Activated CD4-positive, alpha-beta T cell treated with anti-CD3 and anti-CD28 coated beads, Interleukin-2, amount 10 ng/mL, durations not matched to agents 7 days and 5 days (primary cell): ENCODE measurements at regions of chr2 and their contacts with region 1.

Region 1: DNA sequence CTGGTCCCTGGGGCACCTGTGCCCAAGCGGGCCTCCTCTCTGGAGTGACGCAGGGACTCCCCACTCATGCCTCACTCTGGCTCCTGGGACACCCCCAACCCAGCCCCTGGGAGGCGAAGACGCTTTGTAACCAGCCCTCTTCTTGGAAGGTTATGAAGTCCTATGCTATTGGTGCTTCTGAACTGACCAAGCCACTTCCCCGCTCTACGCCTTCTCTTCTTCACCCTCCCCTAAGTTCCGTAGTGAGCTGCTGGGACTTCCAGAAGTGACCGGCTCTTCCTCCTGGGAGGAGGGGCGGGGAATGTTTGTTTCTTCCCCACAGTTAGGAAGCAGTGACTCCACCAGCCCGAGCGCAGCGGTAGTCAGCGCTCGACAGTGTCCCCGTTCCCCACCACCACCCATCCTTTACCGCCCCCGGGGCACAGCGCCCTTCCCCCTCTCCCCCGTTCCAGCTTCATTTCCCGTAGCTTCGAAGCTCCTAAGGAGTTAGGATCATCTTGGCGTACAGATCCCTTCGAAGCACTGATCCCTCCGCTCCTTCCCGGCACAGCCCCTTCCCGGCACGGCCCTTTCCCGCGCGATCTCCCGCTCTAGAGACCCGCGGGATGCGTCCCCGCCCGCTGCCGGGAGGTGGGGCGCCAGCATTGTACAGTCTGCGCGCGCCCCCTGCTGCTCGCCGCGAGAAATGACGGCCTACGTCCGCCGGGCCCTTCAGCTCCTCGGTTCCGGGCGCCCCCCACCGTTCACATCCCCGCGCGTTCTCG is 25.3 kb upstream of the NOTO start:
- DNase-seq: peak; percentile 88
- H3K4me3 Mint-ChIP-seq: peak overlapping the region; percentile 77
- H3K27ac Mint-ChIP-seq: peak overlapping the region; percentile 50
- H3K4me1 Mint-ChIP-seq: peaks cover 18% of the 10 kb centered on the region
- H3K27me3 Mint-ChIP-seq: peaks cover 67% of the 10 kb centered on the region

Region 2: DNA sequence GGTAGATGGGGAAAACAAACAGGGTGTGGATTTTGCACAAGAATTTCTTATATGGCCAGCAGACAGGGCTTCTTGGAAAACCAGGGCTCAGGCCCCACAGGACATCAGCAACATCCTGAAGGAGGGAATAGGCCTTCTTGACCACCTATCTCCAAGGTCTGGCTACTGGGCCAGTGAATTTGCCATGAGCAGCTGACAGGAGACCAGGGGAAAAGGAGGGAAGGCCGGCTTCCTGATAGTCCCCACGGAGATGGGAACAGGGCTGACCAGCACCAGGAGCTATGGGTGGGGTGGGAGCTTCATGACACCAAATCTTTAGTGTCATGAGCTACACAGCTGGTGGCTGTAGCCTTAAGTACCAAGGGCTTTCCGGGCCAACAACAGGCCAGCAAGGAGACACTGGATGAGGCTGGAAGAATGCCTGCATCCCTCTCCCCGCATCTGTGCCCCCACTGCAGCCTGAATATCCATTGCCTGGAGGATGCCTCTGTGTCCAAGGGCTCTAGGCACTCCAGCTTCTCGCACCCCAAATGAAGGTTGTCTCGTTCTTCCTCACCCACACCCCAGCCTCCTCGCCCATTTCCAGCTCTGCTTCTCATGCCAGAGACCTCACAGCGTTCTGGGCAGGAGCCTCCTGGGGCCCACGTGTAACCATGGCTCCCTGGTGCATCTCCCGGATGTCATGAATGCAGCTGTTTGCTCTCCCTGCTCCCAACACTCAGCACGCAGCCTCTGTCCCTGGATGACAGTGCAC is 184.9 kb before region 1 on chr2:
- CTCF ChIA-PET with region 1: interaction called, 12 read pairs
- POLR2A ChIA-PET with region 1: no interaction called
- DNase-seq: no peak
- H3K4me3 Mint-ChIP-seq: no peak overlapping the region
- H3K27ac Mint-ChIP-seq: no peak overlapping the region
- H3K4me1 Mint-ChIP-seq: no peaks in the 10 kb centered on the region
- H3K27me3 Mint-ChIP-seq: no peaks in the 10 kb centered on the region

Region 3: GRCh38 chr2:73071360-73072133 is 105.5 kb before region 1 on chr2 and contains the start of gene SFXN5:
- CTCF ChIA-PET with region 1: interaction called, 10 read pairs
- POLR2A ChIA-PET with region 1: no interaction called
- DNase-seq: peak; percentile 94
- H3K4me3 Mint-ChIP-seq: peak within 1 kb of the TSS; percentile 88
- H3K27ac Mint-ChIP-seq: peak within 1 kb of the TSS; percentile 95
- H3K4me1 Mint-ChIP-seq: peaks cover 23% of the 10 kb centered on the region
- H3K27me3 Mint-ChIP-seq: peaks cover 3% of the 10 kb centered on the region
- total RNA-seq, gene SFXN5: 7.0 to 10.0 TPM

Region 4: DNA sequence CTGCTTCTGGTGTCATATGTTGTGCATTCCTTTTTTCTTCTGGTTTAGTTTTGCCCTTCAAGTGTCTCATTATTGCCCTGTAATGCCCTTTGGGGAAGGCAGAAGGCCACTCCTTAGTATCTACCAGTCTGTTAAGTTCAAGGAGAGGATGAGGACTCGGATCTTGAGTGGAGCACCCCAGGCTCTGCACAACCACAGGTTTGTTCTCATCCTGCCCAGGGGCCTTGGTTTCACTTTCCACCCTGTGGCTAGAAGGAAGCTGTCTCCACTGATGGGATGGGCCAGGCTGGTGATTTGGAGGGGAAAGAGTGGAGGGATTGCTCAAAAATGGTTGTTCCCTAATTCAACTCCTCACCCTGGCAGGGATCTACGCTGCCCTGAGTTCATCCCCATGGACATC is 34.1 kb before region 1 on chr2:
- CTCF ChIA-PET with region 1: no interaction called
- POLR2A ChIA-PET with region 1: no interaction called
- DNase-seq: no peak
- H3K4me3 Mint-ChIP-seq: no peak overlapping the region
- H3K27ac Mint-ChIP-seq: no peak overlapping the region
- H3K4me1 Mint-ChIP-seq: peaks cover 5% of the 10 kb centered on the region
- H3K27me3 Mint-ChIP-seq: peaks cover 20% of the 10 kb centered on the region

Region 5: GRCh38 chr2:73163483-73164367 is 13.3 kb before region 1 on chr2:
- CTCF ChIA-PET with region 1: interaction called, 18 read pairs
- POLR2A ChIA-PET with region 1: no interaction called
- DNase-seq: peak; percentile 67
- H3K4me3 Mint-ChIP-seq: no peak overlapping the region
- H3K27ac Mint-ChIP-seq: no peak overlapping the region
- H3K4me1 Mint-ChIP-seq: no peaks in the 10 kb centered on the region
- H3K27me3 Mint-ChIP-seq: peaks cover 5% of the 10 kb centered on the region

Region 6: DNA sequence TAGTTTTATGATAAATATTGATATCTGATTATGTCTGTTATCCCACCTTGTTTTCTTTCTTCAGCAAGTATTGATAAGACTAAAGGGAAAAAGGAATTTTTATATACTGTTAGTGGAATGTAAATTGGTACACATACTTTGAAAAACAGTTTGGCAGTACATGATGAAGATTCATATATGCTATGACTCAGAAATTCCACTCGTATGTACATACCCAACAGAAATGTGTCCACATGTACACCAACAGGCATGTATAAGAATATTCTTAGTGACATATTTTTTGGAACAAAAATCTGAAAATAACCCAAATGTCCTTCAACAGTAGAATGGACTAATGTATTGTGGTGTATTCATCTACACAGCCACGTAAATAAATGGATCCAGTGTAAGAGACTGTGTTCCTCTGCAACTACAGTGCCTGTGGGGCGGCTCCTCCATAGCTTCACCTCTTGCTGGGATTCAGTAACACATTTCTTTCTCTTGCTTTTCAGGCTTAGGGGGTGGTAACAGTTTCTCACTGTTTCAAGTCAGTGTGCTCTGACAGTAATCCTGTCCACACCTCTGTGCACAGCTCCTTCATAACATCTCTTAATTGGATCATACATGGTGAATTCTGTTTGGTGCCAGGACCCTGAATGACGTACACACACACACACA is 173.1 kb after region 1 on chr2:
- CTCF ChIA-PET with region 1: no interaction called
- POLR2A ChIA-PET with region 1: no interaction called
- DNase-seq: no peak
- H3K4me3 Mint-ChIP-seq: no peak overlapping the region
- H3K27ac Mint-ChIP-seq: no peak overlapping the region
- H3K4me1 Mint-ChIP-seq: no peaks in the 10 kb centered on the region
- H3K27me3 Mint-ChIP-seq: peaks cover 19% of the 10 kb centered on the region